Activated CD4-positive, alpha-beta T cell treated with anti-CD3 and anti-CD28 coated beads, Interleukin-2, amount 10 ng/mL, durations not matched to agents 24 days and 14 days (primary cell): ENCODE measurements at regions of chr9 and their contacts with region 1.

Region 1: GRCh38 chr9:89318123-89319014 is at the start of gene SECISBP2:
- DNase-seq: peak; percentile 98
- H3K4me3 Mint-ChIP-seq: peak within 1 kb of the TSS; percentile 95
- H3K27ac Mint-ChIP-seq: peak within 1 kb of the TSS; percentile 99
- H3K4me1 Mint-ChIP-seq: peaks cover 66% of the 10 kb centered on the region
- H3K27me3 Mint-ChIP-seq: no peaks in the 10 kb centered on the region
- total RNA-seq, gene SECISBP2: 48.6 and 50.7 TPM in 2 replicates

Region 2: GRCh38 chr9:88605512-88606362 is 712.6 kb before region 1 on chr9:
- intact Hi-C with region 1: no loop called
- DNase-seq: no peak
- H3K4me3 Mint-ChIP-seq: no peak overlapping the region
- H3K27ac Mint-ChIP-seq: no peak overlapping the region
- H3K4me1 Mint-ChIP-seq: no peaks in the 10 kb centered on the region
- H3K27me3 Mint-ChIP-seq: peaks cover 13% of the 10 kb centered on the region

Region 3: GRCh38 chr9:88697764-88698432 is 620.5 kb before region 1 on chr9:
- intact Hi-C with region 1: no loop called
- DNase-seq: no peak
- H3K4me3 Mint-ChIP-seq: no peak overlapping the region
- H3K27ac Mint-ChIP-seq: no peak overlapping the region
- H3K4me1 Mint-ChIP-seq: no peaks in the 10 kb centered on the region
- H3K27me3 Mint-ChIP-seq: peaks cover 3% of the 10 kb centered on the region

Region 4: DNA sequence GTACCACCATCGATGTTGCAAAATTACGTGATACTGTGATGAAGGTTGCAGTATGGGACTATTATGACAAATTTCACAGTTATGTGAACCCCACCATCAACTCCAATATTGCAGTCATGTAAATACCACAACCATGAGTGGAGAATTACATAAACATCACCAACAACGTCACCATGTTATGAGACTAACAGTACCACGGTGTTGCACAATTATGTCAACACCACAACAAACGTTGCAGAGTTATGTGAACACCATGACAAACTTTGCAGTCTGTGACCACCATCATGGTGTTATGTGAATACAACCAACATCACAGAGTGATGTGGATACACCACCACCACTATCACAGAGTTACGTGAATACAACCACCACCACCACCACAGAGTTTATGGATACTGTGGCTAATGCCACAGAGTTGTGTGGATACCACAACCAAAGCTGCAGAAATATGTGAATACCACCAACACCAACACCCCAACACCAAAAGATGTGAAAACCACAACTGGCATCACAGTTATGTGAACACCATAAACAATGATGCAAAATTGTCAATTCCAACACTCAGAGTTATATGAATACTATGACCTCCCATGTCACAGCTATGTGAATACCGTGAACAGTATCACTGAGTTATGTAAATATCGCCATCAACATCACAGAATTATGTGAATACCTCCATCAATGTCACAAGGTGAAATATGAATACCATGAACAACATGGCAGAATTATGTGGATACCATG is 202.1 kb before region 1 on chr9:
- intact Hi-C with region 1: no loop called
- DNase-seq: no peak
- H3K4me3 Mint-ChIP-seq: no peak overlapping the region
- H3K27ac Mint-ChIP-seq: no peak overlapping the region
- H3K4me1 Mint-ChIP-seq: no peaks in the 10 kb centered on the region
- H3K27me3 Mint-ChIP-seq: peaks cover 12% of the 10 kb centered on the region

Region 5: GRCh38 chr9:89418882-89419640 is 100.7 kb after region 1 on chr9:
- intact Hi-C with region 1: loop called (anchors 1 kb)
- DNase-seq: peak; percentile 92
- H3K4me3 Mint-ChIP-seq: peak overlapping the region; percentile 93
- H3K27ac Mint-ChIP-seq: peak overlapping the region; percentile 86
- H3K4me1 Mint-ChIP-seq: peaks cover 82% of the 10 kb centered on the region
- H3K27me3 Mint-ChIP-seq: no peaks in the 10 kb centered on the region

Region 6: DNA sequence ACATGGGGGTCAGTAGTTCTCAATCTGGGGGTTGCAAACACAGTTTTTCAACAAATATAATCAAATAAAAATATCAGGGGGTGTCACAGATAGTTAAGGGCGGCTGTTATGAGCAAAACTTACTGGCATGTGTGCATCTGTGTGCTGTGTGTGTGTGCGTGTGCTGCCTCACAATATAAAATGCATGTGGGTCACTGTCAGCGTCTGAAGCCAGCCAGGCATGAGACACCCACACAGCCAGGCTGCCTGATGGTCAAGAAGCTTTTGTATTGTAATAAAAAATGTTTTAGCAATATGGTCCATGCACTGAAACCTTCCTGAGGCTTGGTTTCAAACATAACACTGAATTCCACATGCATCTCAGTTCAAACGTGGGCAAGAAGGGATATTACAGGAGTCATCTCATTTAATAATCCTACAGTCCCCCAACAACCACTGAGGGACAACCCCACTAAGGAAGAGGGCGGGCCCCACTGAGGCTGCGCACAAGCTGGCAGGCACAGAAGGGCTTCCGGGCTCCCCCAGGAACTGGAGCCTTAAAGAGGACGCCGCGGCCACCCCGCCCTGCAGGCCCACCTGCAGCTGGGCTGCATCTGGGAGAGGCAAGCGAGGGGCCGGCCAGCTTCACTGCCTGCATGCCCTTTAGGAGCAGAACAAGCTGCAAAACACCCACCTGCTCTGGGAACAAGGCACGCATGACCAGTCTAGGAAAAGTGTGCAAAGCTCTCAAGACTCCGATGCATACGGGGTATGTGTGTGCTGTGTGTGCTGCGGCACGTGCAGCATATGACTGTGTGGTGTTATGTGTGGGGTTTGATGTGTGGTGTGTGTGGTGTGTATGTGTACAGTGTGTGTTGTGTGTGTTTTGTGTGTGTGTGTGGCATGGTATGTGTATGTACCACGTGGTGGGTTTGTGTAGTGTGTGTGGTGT is 165.5 kb after region 1 on chr9:
- intact Hi-C with region 1: loop called (anchors 2 kb)
- DNase-seq: peak; percentile 90
- H3K4me3 Mint-ChIP-seq: peak overlapping the region; percentile 82
- H3K27ac Mint-ChIP-seq: peak overlapping the region; percentile 98
- H3K4me1 Mint-ChIP-seq: peaks cover 81% of the 10 kb centered on the region
- H3K27me3 Mint-ChIP-seq: no peaks in the 10 kb centered on the region

Region 7: GRCh38 chr9:89522261-89522958 is 204.0 kb after region 1 on chr9:
- intact Hi-C with region 1: loop called (anchors 10 kb)
- DNase-seq: peak; percentile 94
- H3K4me3 Mint-ChIP-seq: peak overlapping the region; percentile 68
- H3K27ac Mint-ChIP-seq: peak overlapping the region; percentile 94
- H3K4me1 Mint-ChIP-seq: peaks cover 81% of the 10 kb centered on the region
- H3K27me3 Mint-ChIP-seq: no peaks in the 10 kb centered on the region

Region 8: GRCh38 chr9:89602978-89603766 is 284.8 kb after region 1 on chr9:
- intact Hi-C with region 1: loop called (anchors 2 kb)
- DNase-seq: peak; percentile 97
- H3K4me3 Mint-ChIP-seq: peak overlapping the region; percentile 92
- H3K27ac Mint-ChIP-seq: peak overlapping the region; percentile 89
- H3K4me1 Mint-ChIP-seq: peaks cover 32% of the 10 kb centered on the region
- H3K27me3 Mint-ChIP-seq: peaks cover 17% of the 10 kb centered on the region

Region 9: GRCh38 chr9:89743573-89744361 is 425.4 kb after region 1 on chr9:
- intact Hi-C with region 1: loop called (anchors 10 kb)
- DNase-seq: peak; percentile 94
- H3K4me3 Mint-ChIP-seq: peak overlapping the region; percentile 67
- H3K27ac Mint-ChIP-seq: peak overlapping the region; percentile 87
- H3K4me1 Mint-ChIP-seq: peaks cover 80% of the 10 kb centered on the region
- H3K27me3 Mint-ChIP-seq: no peaks in the 10 kb centered on the region